Sigmoid colon (tissue), 7 donors: ENCODE measurements at regions of chr19 and their contacts with region 1.

Region 1: DNA sequence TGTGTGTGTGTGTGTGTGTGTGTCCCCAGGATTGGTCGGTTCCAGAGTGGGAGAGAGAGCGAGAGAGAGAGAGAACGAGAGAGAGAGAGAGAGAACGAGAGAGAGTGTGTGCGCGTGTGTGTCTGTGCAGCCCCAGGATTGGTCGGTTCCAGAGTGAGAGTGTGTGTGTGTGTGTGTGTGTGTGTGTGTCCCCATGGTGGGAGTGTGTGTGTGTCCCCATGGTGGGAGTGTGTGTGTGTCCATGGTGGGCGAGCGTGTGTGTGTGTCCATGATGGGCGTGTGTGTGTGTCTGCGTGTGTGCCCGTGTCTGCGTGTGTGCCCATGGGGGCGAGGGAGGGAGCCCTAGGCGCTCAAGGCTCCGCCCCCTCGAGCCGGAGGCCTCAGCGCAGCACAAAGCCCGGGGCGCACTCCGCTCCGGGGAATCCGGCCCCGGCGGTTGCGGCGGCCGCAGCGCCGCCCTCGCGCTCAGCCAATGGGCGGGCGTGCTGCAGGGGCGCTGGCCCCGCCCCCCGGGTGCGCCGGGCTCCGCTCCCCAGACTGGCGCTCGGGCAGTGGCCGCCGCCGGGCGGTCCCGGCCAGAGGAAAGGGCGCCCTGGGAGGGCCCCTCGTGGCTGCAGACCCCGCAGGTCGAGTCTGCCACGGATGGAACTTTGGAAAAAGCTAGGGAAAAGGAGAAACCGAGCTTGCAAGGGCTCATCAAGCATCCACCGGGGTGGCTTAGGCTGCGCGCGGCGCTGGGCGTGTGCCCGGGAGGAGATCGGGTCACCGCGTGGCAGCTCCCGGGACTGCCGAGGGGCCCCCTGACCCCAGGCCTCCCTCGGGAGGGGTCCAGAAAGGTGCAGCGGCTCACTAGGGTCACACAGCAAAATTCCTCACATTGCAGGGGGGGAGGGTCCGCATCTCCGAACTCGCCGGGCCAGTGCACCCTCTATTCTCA is 96.2 kb downstream of the INSR start:
- DNase-seq: peak; percentile 97
- H3K4me3 ChIP-seq: peak overlapping the region; percentile 52 to 75 (median 66)
- H3K27ac ChIP-seq: peak overlapping the region; percentile 85 to 92 (median 88)
- H3K4me1 ChIP-seq: peaks cover 0 to 30% (median 22%) of the 10 kb centered on the region in 4 donors
- H3K27me3 ChIP-seq: no peaks in the 10 kb centered on the region
- CTCF ChIP-seq: peak in 3 of 4 experiments; percentile 26 to 58 (median 30)
- EP300 ChIP-seq: no peak
- POLR2A ChIP-seq: peak; percentile 14 to 41

Region 2: GRCh38 chr19:7004313-7004931 is 193.6 kb before region 1 on chr19:
- intact Hi-C with region 1: no loop called
- DNase-seq: no peak
- H3K4me3 ChIP-seq: no peak overlapping the region
- H3K27ac ChIP-seq: no peak overlapping the region
- H3K4me1 ChIP-seq: no peaks in the 10 kb centered on the region
- H3K27me3 ChIP-seq: peaks cover 0 to 6% (median 0%) of the 10 kb centered on the region in 3 donors
- CTCF ChIP-seq: no peak
- EP300 ChIP-seq: no peak
- POLR2A ChIP-seq: no peak

Region 3: GRCh38 chr19:7159105-7159933 is 38.7 kb before region 1 on chr19:
- intact Hi-C with region 1: loop called (anchors 2 kb)
- DNase-seq: peak; percentile 96
- H3K4me3 ChIP-seq: no peak overlapping the region
- H3K27ac ChIP-seq: peak overlapping the region; percentile 76 to 89 (median 82)
- H3K4me1 ChIP-seq: peaks cover 0 to 28% (median 16%) of the 10 kb centered on the region in 4 donors
- H3K27me3 ChIP-seq: no peaks in the 10 kb centered on the region
- CTCF ChIP-seq: no peak
- EP300 ChIP-seq: peak in 3 of 4 donors; percentile 3 to 94 (median 56)
- POLR2A ChIP-seq: no peak

Region 4: GRCh38 chr19:7177926-7178325 is 20.1 kb before region 1 on chr19:
- intact Hi-C with region 1: loop called (anchors 2 kb)
- DNase-seq: peak; percentile 66
- H3K4me3 ChIP-seq: no peak overlapping the region
- H3K27ac ChIP-seq: peak overlapping the region; percentile 51 to 88 (median 74)
- H3K4me1 ChIP-seq: peaks cover 0 to 66% (median 55%) of the 10 kb centered on the region in 4 donors
- H3K27me3 ChIP-seq: no peaks in the 10 kb centered on the region
- CTCF ChIP-seq: no peak
- EP300 ChIP-seq: peak in 3 of 4 donors; percentile 23 to 58 (median 41)
- POLR2A ChIP-seq: no peak

Region 5: DNA sequence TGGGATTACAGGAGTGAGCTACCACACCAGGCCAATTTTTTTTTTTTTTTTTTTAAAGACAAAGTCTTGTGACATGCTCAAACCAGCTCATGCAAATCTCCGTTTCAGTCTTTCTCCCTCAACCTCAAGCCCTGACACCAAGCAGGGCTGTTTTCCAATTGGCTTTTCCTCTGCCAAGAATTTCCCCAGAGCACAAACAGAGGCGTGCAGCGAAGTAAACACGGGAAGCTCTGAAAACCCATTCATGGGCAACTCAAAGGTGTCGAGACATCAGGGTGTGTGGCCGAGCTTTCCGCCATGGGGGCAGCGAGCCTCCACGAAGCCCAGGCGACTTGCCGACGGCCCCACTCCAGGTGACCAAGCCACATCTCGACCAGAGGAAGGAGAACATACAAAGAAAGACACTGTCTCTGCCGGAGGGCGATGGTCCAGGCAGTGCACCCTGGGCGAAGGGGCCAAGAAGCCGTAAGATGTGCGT is 26.2 kb after region 1 on chr19:
- intact Hi-C with region 1: loop called (anchors 1 kb)
- DNase-seq: peak; percentile 90
- H3K4me3 ChIP-seq: peak overlapping the region in 3 of 4 donors; percentile 16 to 28 (median 28)
- H3K27ac ChIP-seq: peak overlapping the region; percentile 74 to 87 (median 77)
- H3K4me1 ChIP-seq: peaks cover 0 to 54% (median 34%) of the 10 kb centered on the region in 4 donors
- H3K27me3 ChIP-seq: no peaks in the 10 kb centered on the region
- CTCF ChIP-seq: no peak
- EP300 ChIP-seq: no peak
- POLR2A ChIP-seq: no peak

Region 6: GRCh38 chr19:7242601-7243258 is 44.7 kb after region 1 on chr19:
- intact Hi-C with region 1: loop called (anchors 5 kb)
- DNase-seq: no peak
- H3K4me3 ChIP-seq: no peak overlapping the region
- H3K27ac ChIP-seq: peak overlapping the region; percentile 53 to 82 (median 66)
- H3K4me1 ChIP-seq: peaks cover 0 to 15% (median 9%) of the 10 kb centered on the region in 4 donors
- H3K27me3 ChIP-seq: no peaks in the 10 kb centered on the region
- CTCF ChIP-seq: no peak
- EP300 ChIP-seq: no peak
- POLR2A ChIP-seq: no peak